SK-N-SH (cell line): ENCODE measurements at regions of chr17 and their contacts with region 1.

Region 1: GRCh38 chr17:7444682-7445618 is at the start of gene CHRNB1:
- DNase-seq: peak; percentile 94
- H3K4me3 ChIP-seq: peak within 1 kb of the TSS in 1 of 2 experiments; percentile 17; a peak in 1 of 4 replicates
- H3K27ac ChIP-seq: peak within 1 kb of the TSS in 1 of 2 experiments; percentile 39; a peak in 1 of 4 replicates
- H3K4me1 ChIP-seq: peaks cover 7 to 17% of the 10 kb centered on the region in 2 experiments; a peak in 2 of 4 replicates
- H3K27me3 ChIP-seq: no peaks in the 10 kb centered on the region
- CTCF ChIP-seq: no peak
- EP300 ChIP-seq: no peak
- RAD21 ChIP-seq: no peak
- polyA plus RNA-seq, gene CHRNB1: 26.8 and 29.7 TPM in 2 replicates

Region 2: GRCh38 chr17:7403977-7404736 is 40.8 kb before region 1 on chr17 and contains the start of gene TMEM256:
- CTCF ChIA-PET with region 1: interaction called, 3 read pairs
- POLR2A ChIA-PET with region 1: interaction called, 13 read pairs
- DNase-seq: peak; percentile 93
- H3K4me3 ChIP-seq: peak within 1 kb of the TSS; percentile 78 to 91
- H3K27ac ChIP-seq: peak within 1 kb of the TSS; percentile 76 to 91
- H3K4me1 ChIP-seq: peaks cover 5 to 21% of the 10 kb centered on the region in 2 experiments; a peak in 2 of 4 replicates
- H3K27me3 ChIP-seq: no peaks in the 10 kb centered on the region
- CTCF ChIP-seq: no peak
- EP300 ChIP-seq: 0 out of 4 replicates have a peak, but pooled peaks of 1 of the 2 experiments have one; percentile 24
- RAD21 ChIP-seq: no peak
- polyA plus RNA-seq, gene TMEM256: 114 and 213 TPM in 2 replicates

Region 3: DNA sequence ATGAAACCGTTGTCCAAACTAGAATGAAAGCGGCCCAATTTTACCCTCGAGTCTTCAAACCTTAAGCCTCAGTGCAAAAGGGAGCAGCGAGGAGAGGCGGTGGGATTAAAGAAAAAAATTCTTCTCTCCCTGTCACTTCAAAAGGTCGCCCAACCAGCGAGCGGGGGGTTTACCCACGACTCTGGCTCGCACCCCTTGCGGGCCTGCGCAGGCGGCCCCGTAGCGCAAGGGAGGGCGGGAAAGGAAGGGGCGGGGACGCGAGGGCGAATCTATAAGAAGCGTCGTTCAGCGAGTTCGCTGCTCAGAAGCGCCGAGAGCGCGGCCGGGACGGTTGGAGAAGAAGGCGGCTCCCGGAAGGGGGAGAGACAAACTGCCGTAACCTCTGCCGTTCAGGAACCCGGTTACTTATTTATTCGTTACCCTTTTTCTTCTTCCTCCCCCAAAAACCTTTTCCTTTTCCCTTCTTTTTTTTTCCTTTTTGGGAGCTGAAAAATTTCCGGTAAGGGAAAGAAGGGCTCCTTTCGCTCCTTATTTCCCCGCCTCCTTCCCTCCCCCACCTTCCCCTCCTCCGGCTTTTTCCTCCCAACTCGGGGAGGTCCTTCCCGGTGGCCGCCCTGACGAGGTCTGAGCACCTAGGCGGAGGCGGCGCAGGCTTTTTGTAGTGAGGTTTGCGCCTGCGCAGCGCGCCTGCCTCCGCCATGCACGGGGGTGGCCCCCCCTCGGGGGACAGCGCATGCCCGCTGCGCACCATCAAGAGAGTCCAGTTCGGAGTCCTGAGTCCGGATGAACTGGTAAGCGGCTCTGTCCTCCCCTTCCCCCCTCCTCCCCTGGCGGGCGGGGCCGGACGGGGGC is 39.3 kb after region 1 on chr17 and contains the start of gene POLR2A:
- CTCF ChIA-PET with region 1: no interaction called
- POLR2A ChIA-PET with region 1: interaction called, 19 read pairs
- DNase-seq: peak; percentile 98
- H3K4me3 ChIP-seq: peak within 1 kb of the TSS; percentile 85 to 100
- H3K27ac ChIP-seq: peak within 1 kb of the TSS; percentile 99
- H3K4me1 ChIP-seq: peaks cover 31 to 34% of the 10 kb centered on the region in 2 experiments
- H3K27me3 ChIP-seq: no peaks in the 10 kb centered on the region
- CTCF ChIP-seq: no peak
- EP300 ChIP-seq: peak in 1 of 2 experiments; percentile 2; a peak in 2 of 4 replicates
- RAD21 ChIP-seq: 0 out of 2 replicates have a peak, but pooled peaks have one; percentile 13
- polyA plus RNA-seq, gene POLR2A: 19.0 and 37.3 TPM in 2 replicates